Activated CD4-positive, alpha-beta T cell treated with anti-CD3 and anti-CD28 coated beads for 36 hours (primary cell): ENCODE measurements at regions of chr17 and their contacts with region 1.

Region 1: DNA sequence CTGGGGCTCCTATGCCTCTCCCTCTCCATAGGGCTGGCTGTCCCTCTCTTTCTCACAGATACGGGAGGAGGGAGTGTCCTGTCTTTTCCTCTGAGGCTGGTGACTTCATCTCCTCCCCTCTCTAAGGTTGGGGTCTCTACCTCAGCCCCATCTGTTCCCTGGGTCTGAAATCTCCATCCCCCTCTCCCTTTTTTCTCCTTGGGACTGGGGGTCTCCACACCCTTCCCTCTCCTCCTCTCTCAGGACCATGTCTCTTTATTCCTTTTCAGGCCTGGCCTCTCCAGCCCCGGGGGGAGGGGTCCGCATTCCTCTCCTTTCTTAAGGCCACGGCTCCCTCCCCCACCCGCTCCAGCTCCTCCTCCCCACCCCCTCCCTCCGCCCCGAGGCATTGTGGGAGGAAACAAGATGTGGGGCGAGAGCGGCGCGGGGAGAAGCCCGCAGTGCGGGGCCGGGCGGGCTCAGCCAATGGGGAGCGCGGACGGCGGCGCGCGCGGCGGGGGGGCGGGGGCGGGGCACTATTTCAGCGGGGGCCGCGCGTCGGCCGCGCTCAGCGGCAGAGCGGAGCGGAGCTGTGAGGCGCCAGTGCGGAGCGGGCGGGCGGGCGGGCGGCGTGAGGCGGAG is at the start of gene DYNLL2:
- DNase-seq: peak; percentile 95
- ATAC-seq: peak; percentile 89
- H3K4me3 Mint-ChIP-seq: peak within 1 kb of the TSS; percentile 83
- H3K27ac Mint-ChIP-seq: peak within 1 kb of the TSS; percentile 79
- H3K4me1 Mint-ChIP-seq: peaks cover 35% of the 10 kb centered on the region
- H3K27me3 Mint-ChIP-seq: no peaks in the 10 kb centered on the region
- total RNA-seq, gene DYNLL2: 21.3 to 28.3 TPM

Region 2: GRCh38 chr17:57255776-57256681 is 827.0 kb before region 1 on chr17 and contains the start of gene MSI2:
- CTCF ChIA-PET with region 1: no interaction called
- POLR2A ChIA-PET with region 1: no interaction called
- intact Hi-C with region 1: loop called in 1 of 2 experiments (anchors 5 kb)
- DNase-seq: peak; percentile 93
- ATAC-seq: peak; percentile 75
- H3K4me3 Mint-ChIP-seq: peak within 1 kb of the TSS; percentile 80
- H3K27ac Mint-ChIP-seq: peak within 1 kb of the TSS; percentile 79
- H3K4me1 Mint-ChIP-seq: peaks cover 42% of the 10 kb centered on the region
- H3K27me3 Mint-ChIP-seq: no peaks in the 10 kb centered on the region
- total RNA-seq, gene MSI2: 55.3 to 57.2 TPM

Region 3: DNA sequence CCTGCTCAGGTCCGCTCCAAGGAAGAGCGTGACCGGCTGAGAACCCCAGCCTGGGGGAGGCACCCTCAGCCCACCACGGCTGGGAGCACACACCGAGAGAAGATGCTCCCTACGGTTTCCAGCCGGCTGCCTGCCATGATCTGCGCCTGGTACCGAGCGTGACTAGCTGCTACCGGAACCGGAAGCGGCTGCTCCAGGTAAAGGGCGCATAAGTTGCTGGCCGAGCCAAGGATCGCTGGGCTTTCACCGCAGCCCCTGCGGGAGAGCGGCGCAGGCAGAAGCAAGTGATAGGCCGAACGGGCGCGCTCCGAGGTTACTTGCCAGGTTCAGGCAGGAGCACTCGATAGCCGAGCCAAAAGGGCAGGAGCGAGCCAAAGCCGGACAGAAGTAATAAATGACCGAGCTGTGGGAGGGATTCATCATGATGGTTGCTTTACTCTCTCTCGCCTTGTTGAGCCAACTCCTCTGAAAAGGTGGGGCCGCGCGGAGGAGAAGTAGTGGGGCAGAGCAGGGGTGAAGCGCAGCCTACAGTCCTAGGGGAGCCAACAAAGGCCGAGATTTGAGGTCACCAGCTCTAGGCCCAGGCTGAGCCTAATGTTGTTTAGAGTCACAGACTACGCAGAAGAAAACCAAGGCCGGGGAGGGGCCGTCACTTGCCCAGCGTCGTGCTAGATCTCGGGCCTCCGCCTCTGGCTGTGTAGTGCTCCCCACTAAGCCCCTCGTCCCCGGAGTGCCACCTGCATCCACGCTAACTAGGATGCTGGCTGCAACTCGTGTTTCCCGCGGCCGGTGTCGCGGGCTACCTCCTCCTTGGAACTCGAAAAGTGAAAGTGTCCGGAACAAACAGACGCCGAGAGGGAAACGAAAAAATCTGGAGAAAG is 232.9 kb before region 1 on chr17 and contains the start of gene MRPS23:
- CTCF ChIA-PET with region 1: no interaction called
- POLR2A ChIA-PET with region 1: no interaction called
- intact Hi-C with region 1: loop called in 1 of 2 experiments (anchors 1 kb)
- DNase-seq: peak; percentile 99
- ATAC-seq: peak; percentile 91
- H3K4me3 Mint-ChIP-seq: peak within 1 kb of the TSS; percentile 98
- H3K27ac Mint-ChIP-seq: peak within 1 kb of the TSS; percentile 95
- H3K4me1 Mint-ChIP-seq: peaks cover 30% of the 10 kb centered on the region
- H3K27me3 Mint-ChIP-seq: no peaks in the 10 kb centered on the region
- total RNA-seq, gene MRPS23: 42.6 to 69.7 TPM

Region 4: DNA sequence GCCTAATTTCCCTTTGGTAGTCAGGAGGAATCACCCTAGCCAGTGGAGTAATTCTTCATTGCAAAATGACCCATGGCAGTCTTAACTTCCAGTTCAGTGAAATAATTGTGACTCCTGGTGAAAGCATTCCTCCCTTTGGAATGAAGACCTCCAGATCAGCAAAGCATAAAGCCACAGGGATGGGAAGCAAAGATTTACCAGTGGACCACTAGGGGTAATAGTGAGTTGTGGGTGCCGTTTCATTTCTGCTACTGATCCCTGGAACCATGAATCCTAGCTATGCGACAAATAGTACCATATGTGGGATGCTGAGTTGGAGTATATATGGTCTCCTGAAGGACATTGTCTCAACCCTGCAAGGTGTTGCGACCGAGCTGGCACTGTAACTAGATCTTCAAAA is 13.9 kb after region 1 on chr17:
- CTCF ChIA-PET with region 1: interaction called, 10 read pairs
- POLR2A ChIA-PET with region 1: interaction called, 4 read pairs
- intact Hi-C with region 1: no loop called
- DNase-seq: no peak
- ATAC-seq: no peak
- H3K4me3 Mint-ChIP-seq: no peak overlapping the region
- H3K27ac Mint-ChIP-seq: no peak overlapping the region
- H3K4me1 Mint-ChIP-seq: peaks cover 5% of the 10 kb centered on the region
- H3K27me3 Mint-ChIP-seq: no peaks in the 10 kb centered on the region

Region 5: GRCh38 chr17:58329035-58329809 is 246.2 kb after region 1 on chr17:
- CTCF ChIA-PET with region 1: no interaction called
- POLR2A ChIA-PET with region 1: no interaction called
- intact Hi-C with region 1: no loop called
- DNase-seq: peak; percentile 93
- ATAC-seq: peak; percentile 43
- H3K4me3 Mint-ChIP-seq: peak overlapping the region; percentile 100
- H3K27ac Mint-ChIP-seq: peak overlapping the region; percentile 93
- H3K4me1 Mint-ChIP-seq: peaks cover 39% of the 10 kb centered on the region
- H3K27me3 Mint-ChIP-seq: peaks cover 2% of the 10 kb centered on the region

Region 6: DNA sequence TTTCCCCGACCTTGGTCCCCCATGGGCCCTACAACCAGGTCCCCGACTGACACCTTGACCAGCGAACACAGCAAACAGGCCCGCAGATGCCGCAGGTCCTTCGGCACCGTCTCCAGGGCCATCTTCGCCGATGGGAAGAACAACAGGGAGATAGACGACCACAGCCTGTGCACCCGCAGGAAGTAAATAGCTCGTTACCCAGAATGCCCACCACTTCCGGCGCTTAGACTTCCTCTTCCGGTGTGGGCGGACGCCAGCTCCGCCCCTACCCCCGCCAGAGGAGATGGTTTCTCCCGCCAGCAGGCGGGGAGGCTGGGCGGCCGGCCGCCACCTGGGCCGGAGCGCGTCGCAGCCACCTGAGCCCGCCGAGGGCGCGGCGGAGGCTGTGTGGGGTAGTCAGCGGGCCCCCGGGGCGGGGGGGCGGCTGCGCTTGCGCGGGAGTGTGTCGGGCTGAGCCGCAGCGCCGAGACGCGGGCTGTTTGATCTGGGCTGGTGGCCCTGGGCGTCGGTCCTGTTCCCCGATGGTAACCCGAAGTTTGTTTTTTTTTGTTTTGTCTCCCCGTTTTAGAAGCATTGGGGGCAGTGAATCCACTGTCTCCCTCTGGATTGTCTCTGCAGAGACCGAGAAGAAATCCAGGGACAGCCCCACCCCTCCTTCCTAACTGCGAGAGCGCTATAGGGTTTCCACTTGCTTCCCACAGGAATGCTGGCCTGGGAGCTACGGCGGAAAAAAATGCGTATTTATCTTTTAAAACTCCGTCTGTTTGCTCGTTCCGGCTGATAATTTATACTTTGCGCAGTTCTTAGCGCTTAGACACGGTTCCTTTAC is 269.2 kb after region 1 on chr17 and contains the start of gene SUPT4H1:
- CTCF ChIA-PET with region 1: no interaction called
- POLR2A ChIA-PET with region 1: no interaction called
- intact Hi-C with region 1: loop called in 1 of 2 experiments (anchors 2 kb)
- DNase-seq: peak; percentile 96
- ATAC-seq: peak; percentile 78
- H3K4me3 Mint-ChIP-seq: peak within 1 kb of the TSS; percentile 97
- H3K27ac Mint-ChIP-seq: peak within 1 kb of the TSS; percentile 98
- H3K4me1 Mint-ChIP-seq: peaks cover 38% of the 10 kb centered on the region
- H3K27me3 Mint-ChIP-seq: no peaks in the 10 kb centered on the region
- total RNA-seq, gene SUPT4H1: 106 to 129 TPM